ENCODE measurements at regions of chr3 and their contacts with region 1.

Region 1: GRCh38 chr3:197029511-197030167 is at the start of gene MELTF:
- DNase-seq: peak; percentile 79
- H3K4me3 Mint-ChIP-seq: peak within 1 kb of the TSS; percentile 71
- H3K27ac Mint-ChIP-seq: no peak within 1 kb of the TSS
- H3K4me1 Mint-ChIP-seq: peaks cover 18% of the 10 kb centered on the region
- H3K27me3 Mint-ChIP-seq: peaks cover 4% of the 10 kb centered on the region
- total RNA-seq, gene MELTF: 6.0 TPM

Region 2: DNA sequence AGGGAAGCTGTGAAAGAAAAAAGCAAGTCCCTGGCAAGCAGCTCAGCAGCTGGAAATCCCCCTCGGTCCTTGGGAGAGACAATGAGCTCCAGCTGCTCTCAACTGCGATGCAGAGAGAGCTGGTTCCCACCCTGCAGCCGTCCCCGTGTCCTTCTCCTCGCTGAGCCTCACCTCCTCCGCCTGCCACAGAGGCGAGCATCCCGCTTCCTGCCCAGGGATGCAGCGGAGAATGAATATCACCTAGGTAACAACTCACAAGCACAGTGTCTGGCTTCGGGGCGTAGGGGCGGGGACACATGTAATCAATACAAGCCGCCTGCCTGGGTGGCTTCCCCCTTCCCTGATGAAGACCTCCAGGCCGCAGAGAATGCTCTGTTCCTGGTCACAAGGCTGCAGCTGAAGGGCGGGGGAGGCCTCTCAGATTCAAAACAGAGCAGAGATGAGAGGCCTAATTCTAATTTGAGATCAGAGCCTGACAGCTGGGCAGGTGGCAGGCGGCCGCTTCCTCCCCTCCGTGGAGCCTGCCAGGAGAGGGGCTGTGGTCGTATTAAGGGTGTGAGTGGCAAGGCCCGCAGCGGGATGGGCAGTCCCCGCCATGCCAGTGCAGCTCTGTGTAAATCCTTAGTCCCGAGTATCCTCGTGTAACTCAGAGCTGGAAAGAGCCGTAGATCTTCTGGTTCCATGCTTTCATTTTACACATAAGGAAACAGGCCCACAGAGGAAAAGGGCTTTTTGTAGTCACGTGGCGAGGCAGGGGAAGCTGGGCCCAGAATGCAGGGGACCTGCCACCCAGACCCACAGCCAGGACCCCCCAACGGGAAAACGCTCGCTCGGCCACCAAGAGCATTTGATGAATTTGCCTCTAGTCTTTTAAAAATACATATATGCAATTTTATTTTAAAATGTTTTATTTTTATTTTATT is 842.7 kb before region 1 on chr3:
- CTCF ChIA-PET with region 1: no interaction called
- POLR2A ChIA-PET with region 1: no interaction called
- intact Hi-C with region 1: no loop called
- DNase-seq: peak; percentile 49
- H3K4me3 Mint-ChIP-seq: peak overlapping the region; percentile 53
- H3K27ac Mint-ChIP-seq: peak overlapping the region; percentile 64
- H3K4me1 Mint-ChIP-seq: peaks cover 41% of the 10 kb centered on the region
- H3K27me3 Mint-ChIP-seq: no peaks in the 10 kb centered on the region

Region 3: GRCh38 chr3:196954832-196955231 is 74.8 kb before region 1 on chr3:
- CTCF ChIA-PET with region 1: no interaction called
- POLR2A ChIA-PET with region 1: no interaction called
- intact Hi-C with region 1: no loop called
- DNase-seq: no peak
- H3K4me3 Mint-ChIP-seq: no peak overlapping the region
- H3K27ac Mint-ChIP-seq: no peak overlapping the region
- H3K4me1 Mint-ChIP-seq: no peaks in the 10 kb centered on the region
- H3K27me3 Mint-ChIP-seq: no peaks in the 10 kb centered on the region

Region 4: GRCh38 chr3:196969660-196970546 is 59.7 kb before region 1 on chr3:
- CTCF ChIA-PET with region 1: interaction called, 10 read pairs
- POLR2A ChIA-PET with region 1: no interaction called
- intact Hi-C with region 1: no loop called
- DNase-seq: peak; percentile 78
- H3K4me3 Mint-ChIP-seq: peak overlapping the region; percentile 58
- H3K27ac Mint-ChIP-seq: no peak overlapping the region
- H3K4me1 Mint-ChIP-seq: peaks cover 12% of the 10 kb centered on the region
- H3K27me3 Mint-ChIP-seq: peaks cover 12% of the 10 kb centered on the region

Region 5: DNA sequence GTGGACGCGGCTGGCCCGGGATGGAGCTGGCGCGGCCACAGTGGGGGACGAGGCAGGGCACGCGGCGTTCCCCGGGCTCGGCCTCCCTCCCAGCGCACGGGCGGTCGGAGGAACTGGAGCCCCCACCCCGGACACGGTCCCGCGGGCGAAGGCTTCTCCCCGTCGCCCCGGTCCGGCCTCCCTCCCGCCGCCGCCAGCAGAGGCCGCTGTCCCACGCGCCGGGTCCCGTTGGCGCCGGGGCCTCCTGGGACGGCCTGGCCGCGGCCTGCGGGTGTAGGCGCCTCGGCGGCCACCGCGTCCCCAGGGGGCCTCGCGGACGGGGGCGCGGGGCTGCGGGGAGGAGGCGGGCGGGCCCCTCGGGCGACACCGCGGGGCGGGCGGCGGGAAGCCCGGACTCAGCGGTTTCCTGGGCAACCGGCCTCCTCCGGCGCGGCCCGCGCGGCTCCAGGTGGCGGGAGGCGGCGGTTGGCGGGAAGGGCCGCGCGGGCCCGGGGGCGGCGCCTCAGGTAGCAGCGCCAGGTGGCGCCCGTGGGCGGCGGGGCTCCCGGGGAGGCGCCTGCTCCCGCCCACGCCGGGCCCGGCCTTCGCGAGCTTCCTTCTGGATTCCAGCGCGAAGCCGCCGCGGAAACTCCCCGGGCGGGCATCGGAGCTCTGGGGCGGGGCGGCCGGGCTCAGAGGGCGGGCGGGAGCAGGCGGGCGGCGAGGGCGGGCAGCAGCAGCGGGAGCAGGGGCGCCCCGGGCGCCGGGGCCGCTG is 26.8 kb before region 1 on chr3:
- CTCF ChIA-PET with region 1: interaction called, 45 read pairs
- POLR2A ChIA-PET with region 1: no interaction called
- intact Hi-C with region 1: loop called (anchors 1 kb)
- DNase-seq: peak; percentile 87
- H3K4me3 Mint-ChIP-seq: no peak overlapping the region
- H3K27ac Mint-ChIP-seq: no peak overlapping the region
- H3K4me1 Mint-ChIP-seq: peaks cover 11% of the 10 kb centered on the region
- H3K27me3 Mint-ChIP-seq: no peaks in the 10 kb centered on the region

Region 6: DNA sequence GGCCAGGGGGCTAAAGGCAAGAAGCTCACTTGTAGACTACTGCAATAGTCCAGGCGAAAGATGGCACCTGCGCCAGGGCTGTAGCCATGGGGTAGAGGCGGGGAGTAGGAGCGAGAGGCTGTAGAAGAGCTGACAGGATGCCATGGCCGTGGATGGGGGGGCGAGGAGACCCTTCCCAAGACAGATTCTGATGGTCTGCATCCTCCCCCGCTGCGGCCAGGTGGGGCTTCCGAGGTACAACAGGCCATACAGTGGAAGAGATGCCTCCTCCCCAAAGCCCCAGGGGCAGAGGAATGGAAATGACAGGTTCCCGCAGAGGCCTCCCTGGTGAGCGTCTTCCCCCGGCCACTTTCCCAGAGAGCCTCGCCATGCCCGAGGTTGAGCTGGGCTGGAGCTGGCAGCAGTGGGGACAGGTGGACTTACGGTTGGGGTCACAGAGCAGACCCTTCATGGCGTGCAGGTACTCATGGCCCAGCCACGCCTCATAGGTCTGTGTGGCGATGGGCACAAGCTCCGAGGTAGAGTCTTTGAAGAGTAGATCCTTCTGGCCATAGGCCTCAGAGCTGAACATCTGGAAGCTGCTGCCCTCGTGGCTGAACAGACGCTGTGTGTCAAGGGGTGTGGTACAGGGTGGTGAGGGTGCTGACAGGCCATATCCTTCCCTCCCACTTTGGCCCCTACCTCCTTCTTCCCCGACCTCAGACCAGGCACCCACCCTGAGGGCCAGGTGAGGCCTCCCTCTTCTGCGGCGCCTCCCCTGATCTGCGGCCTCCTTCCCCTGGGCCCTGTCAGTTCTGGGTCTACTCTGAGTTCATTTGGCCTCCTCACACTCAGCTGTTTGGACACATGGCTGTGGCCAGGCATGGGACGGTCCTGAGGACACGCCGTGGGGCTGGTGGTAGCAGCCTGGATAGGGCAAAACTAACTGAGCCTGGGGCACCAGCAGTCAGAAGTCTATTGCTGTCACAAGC is 13.6 kb before region 1 on chr3:
- CTCF ChIA-PET with region 1: interaction called, 13 read pairs
- POLR2A ChIA-PET with region 1: no interaction called
- intact Hi-C with region 1: no loop called
- DNase-seq: no peak
- H3K4me3 Mint-ChIP-seq: no peak overlapping the region
- H3K27ac Mint-ChIP-seq: no peak overlapping the region
- H3K4me1 Mint-ChIP-seq: no peaks in the 10 kb centered on the region
- H3K27me3 Mint-ChIP-seq: no peaks in the 10 kb centered on the region

Region 7: GRCh38 chr3:197050511-197050910 is 20.9 kb after region 1 on chr3:
- CTCF ChIA-PET with region 1: interaction called, 13 read pairs
- POLR2A ChIA-PET with region 1: no interaction called
- intact Hi-C with region 1: loop called (anchors 1 kb)
- DNase-seq: no peak
- H3K4me3 Mint-ChIP-seq: no peak overlapping the region
- H3K27ac Mint-ChIP-seq: no peak overlapping the region
- H3K4me1 Mint-ChIP-seq: peaks cover 17% of the 10 kb centered on the region
- H3K27me3 Mint-ChIP-seq: no peaks in the 10 kb centered on the region

Measured in activated CD4-positive, alpha-beta memory T cell treated with anti-CD3 and anti-CD28 coated beads for 36 hours (primary cell).